ENCODE measurements at regions of chr5 and their contacts with region 1.

Region 1: DNA sequence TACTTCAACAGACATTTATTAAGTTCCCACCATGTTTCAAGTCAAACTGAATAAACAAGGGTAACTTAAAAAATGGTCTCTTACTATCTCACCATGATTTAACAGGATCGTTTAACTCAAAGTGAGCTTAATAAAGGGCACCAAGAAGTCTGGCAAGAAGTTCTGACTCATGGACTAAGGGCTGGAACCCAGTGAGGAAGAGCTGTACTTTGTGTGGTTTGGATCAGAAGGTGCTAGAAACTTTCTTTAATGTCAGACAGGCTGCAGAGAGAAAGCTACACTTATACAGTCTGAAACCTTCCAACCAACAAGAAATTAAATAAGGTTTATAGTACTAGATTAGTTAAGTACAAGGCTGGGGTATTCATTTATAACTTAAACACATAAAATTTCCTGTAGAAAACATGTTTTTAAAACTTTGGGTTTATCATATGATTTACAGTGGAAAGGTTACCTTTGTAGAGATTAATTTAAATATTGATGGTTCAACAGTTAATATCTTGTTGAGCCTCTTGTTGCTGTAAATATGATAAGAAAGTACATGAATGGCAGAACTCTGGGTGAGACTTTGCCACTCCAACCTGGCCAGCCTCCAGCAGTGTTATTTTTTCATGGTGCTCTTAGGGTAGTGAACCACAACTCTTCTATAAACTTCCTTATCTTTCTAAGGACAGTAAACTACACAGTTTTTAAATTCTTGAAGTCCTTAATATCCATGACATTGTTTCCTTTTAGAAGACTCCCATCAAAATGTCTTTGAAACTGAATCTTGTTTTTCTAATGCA is 162.8 kb downstream of the MAN2A1 start:
- DNase-seq: no peak
- H3K4me3 ChIP-seq: no peak overlapping the region
- H3K4me3 Mint-ChIP-seq: peak overlapping the region in 5 of 8 donors; percentile 10 to 51 (median 28)
- H3K27ac ChIP-seq: no peak overlapping the region
- H3K27ac Mint-ChIP-seq: peak overlapping the region; percentile 16 to 77 (median 58)
- H3K4me1 ChIP-seq: peaks cover 89% of the 10 kb centered on the region
- H3K4me1 Mint-ChIP-seq: peaks cover 61 to 82% (median 68%) of the 10 kb centered on the region in 4 donors
- H3K27me3 ChIP-seq: no peaks in the 10 kb centered on the region
- H3K27me3 Mint-ChIP-seq: no peaks in the 10 kb centered on the region

Region 2: GRCh38 chr5:109141222-109142200 is 711.1 kb before region 1 on chr5:
- CTCF ChIA-PET with region 1: no interaction called
- POLR2A ChIA-PET with region 1: no interaction called
- intact Hi-C with region 1: no loop called
- DNase-seq: no peak
- H3K4me3 ChIP-seq: no peak overlapping the region
- H3K4me3 Mint-ChIP-seq: no peak overlapping the region
- H3K27ac ChIP-seq: no peak overlapping the region
- H3K27ac Mint-ChIP-seq: no peak overlapping the region
- H3K4me1 ChIP-seq: no peaks in the 10 kb centered on the region
- H3K4me1 Mint-ChIP-seq: no peaks in the 10 kb centered on the region
- H3K27me3 ChIP-seq: no peaks in the 10 kb centered on the region
- H3K27me3 Mint-ChIP-seq: no peaks in the 10 kb centered on the region

Region 3: GRCh38 chr5:109898269-109899162 is 46.0 kb after region 1 on chr5:
- CTCF ChIA-PET with region 1: no interaction called
- POLR2A ChIA-PET with region 1: no interaction called
- intact Hi-C with region 1: loop called (anchors 5 kb)
- DNase-seq: no peak
- H3K4me3 ChIP-seq: no peak overlapping the region
- H3K4me3 Mint-ChIP-seq: no peak overlapping the region
- H3K27ac ChIP-seq: no peak overlapping the region
- H3K27ac Mint-ChIP-seq: no peak overlapping the region
- H3K4me1 ChIP-seq: no peaks in the 10 kb centered on the region
- H3K4me1 Mint-ChIP-seq: peaks cover 0 to 5% (median 0%) of the 10 kb centered on the region in 4 donors
- H3K27me3 ChIP-seq: no peaks in the 10 kb centered on the region
- H3K27me3 Mint-ChIP-seq: no peaks in the 10 kb centered on the region

Region 4: GRCh38 chr5:109921735-109922380 is 69.3 kb after region 1 on chr5:
- CTCF ChIA-PET with region 1: interaction called, 8 read pairs
- POLR2A ChIA-PET with region 1: interaction called, 31 read pairs
- intact Hi-C with region 1: loop called (anchors 2 kb)
- DNase-seq: peak; percentile 70 to 81 (median 75)
- H3K4me3 ChIP-seq: peak overlapping the region in 1 of 2 donors; percentile 4
- H3K4me3 Mint-ChIP-seq: peak overlapping the region; percentile 57 to 81 (median 74)
- H3K27ac ChIP-seq: peak overlapping the region; percentile 37
- H3K27ac Mint-ChIP-seq: peak overlapping the region; percentile 85 to 97 (median 92)
- H3K4me1 ChIP-seq: peaks cover 44% of the 10 kb centered on the region
- H3K4me1 Mint-ChIP-seq: peaks cover 32 to 46% (median 39%) of the 10 kb centered on the region in 4 donors
- H3K27me3 ChIP-seq: no peaks in the 10 kb centered on the region
- H3K27me3 Mint-ChIP-seq: no peaks in the 10 kb centered on the region

Region 5: DNA sequence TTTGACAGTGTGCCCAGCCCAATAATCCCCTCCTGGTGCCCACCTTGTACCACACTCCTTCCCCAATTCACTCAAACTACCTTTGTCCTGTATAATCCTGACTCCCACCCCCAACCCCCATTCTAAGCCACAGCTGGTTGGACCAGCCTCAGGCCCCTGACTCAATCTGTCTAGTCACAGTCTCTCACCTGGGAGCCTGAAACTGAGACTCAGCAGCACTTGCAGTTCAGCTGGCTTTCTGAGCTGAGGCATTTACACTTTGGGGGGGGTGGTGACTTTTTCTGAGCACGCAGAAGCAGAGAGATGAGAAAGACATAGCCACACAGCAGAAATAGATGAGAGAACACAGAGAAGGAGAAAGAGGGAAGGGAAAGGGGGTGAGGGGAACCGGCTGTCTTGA is 84.4 kb after region 1 on chr5:
- CTCF ChIA-PET with region 1: no interaction called
- POLR2A ChIA-PET with region 1: no interaction called
- intact Hi-C with region 1: no loop called
- DNase-seq: no peak
- H3K4me3 ChIP-seq: no peak overlapping the region
- H3K4me3 Mint-ChIP-seq: peak overlapping the region in 1 of 8 donors; percentile 11
- H3K27ac ChIP-seq: no peak overlapping the region
- H3K27ac Mint-ChIP-seq: peak overlapping the region in 2 of 7 donors; percentile 20 to 72
- H3K4me1 ChIP-seq: no peaks in the 10 kb centered on the region
- H3K4me1 Mint-ChIP-seq: peaks cover 0 to 8% (median 4%) of the 10 kb centered on the region in 4 donors
- H3K27me3 ChIP-seq: no peaks in the 10 kb centered on the region
- H3K27me3 Mint-ChIP-seq: peaks cover 0 to 2% of the 10 kb centered on the region in 2 donors

Region 6: GRCh38 chr5:110040178-110040577 is 187.6 kb after region 1 on chr5:
- CTCF ChIA-PET with region 1: no interaction called
- POLR2A ChIA-PET with region 1: no interaction called
- intact Hi-C with region 1: no loop called
- DNase-seq: no peak
- H3K4me3 ChIP-seq: no peak overlapping the region
- H3K4me3 Mint-ChIP-seq: no peak overlapping the region
- H3K27ac ChIP-seq: no peak overlapping the region
- H3K27ac Mint-ChIP-seq: no peak overlapping the region
- H3K4me1 ChIP-seq: peaks cover 9% of the 10 kb centered on the region
- H3K4me1 Mint-ChIP-seq: peaks cover 7 to 11% (median 9%) of the 10 kb centered on the region in 4 donors
- H3K27me3 ChIP-seq: no peaks in the 10 kb centered on the region
- H3K27me3 Mint-ChIP-seq: no peaks in the 10 kb centered on the region

Measured in CD4-positive, alpha-beta memory T cell (primary cell).